Motor neuron (in vitro differentiated cells): ENCODE measurements at regions of chr4 and their contacts with region 1.

Region 1: GRCh38 chr4:158729716-158730559 is 6.7 kb upstream of the PPID start:
- ATAC-seq: peak; percentile 68 to 96 (median 86)
- H3K4me3 ChIP-seq: no peak overlapping the region
- H3K27ac ChIP-seq: no peak overlapping the region
- H3K4me1 ChIP-seq: no peaks in the 10 kb centered on the region

Region 2: GRCh38 chr4:158459085-158459820 is 270.7 kb before region 1 on chr4:
- in situ Hi-C with region 1: no loop called
- ATAC-seq: peak in 2 of 8 experiments; percentile 58 to 86
- H3K4me3 ChIP-seq: no peak overlapping the region
- H3K27ac ChIP-seq: no peak overlapping the region
- H3K4me1 ChIP-seq: no peaks in the 10 kb centered on the region

Region 3: GRCh38 chr4:158826057-158826456 is 96.1 kb after region 1 on chr4:
- in situ Hi-C with region 1: loop called in 1 of 9 experiments (anchors 25 kb)
- ATAC-seq: no peak
- H3K4me3 ChIP-seq: no peak overlapping the region
- H3K27ac ChIP-seq: no peak overlapping the region
- H3K4me1 ChIP-seq: peaks cover 0 to 9% of the 10 kb centered on the region in 2 donors

Region 4: GRCh38 chr4:159206427-159206871 is 476.5 kb after region 1 on chr4:
- in situ Hi-C with region 1: loop called in 1 of 9 experiments (anchors 25 kb)
- ATAC-seq: no peak
- H3K4me3 ChIP-seq: no peak overlapping the region
- H3K27ac ChIP-seq: no peak overlapping the region
- H3K4me1 ChIP-seq: no peaks in the 10 kb centered on the region

Region 5: DNA sequence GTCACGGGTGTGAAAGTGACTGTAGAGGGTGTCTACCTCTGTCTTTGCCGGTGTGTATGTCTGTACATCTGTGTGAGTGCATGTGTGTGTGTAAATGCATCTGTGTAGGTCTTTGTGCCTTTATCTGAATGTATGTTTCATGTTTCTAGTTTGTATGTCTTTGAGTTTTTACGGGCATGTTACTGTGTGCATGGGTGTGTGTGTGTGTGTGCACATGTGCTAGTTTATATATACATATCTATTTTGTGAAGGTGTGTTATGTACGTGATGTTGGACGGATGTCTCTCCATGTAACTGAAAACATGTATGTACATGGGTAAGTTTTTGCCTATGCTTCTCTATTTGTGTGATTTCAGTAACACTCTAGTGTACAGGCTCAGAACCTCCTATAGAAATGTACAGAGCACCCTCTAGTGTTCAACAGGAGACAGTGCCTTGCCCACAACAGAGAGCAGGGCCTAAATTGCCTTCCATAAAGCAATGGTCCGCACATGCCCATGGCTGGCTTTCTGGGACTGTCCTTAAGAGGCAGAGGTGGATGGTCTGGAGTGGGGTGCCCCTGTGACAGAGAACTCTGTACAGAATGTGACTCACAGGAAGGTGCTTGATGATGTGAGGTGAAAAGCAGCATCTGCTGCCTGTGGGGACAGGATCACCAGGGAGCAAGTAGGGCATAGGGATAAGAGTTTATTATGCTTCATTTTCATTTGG is 716.5 kb after region 1 on chr4:
- in situ Hi-C with region 1: loop called in 2 of 9 experiments (anchors 25 kb)
- ATAC-seq: peak; percentile 98 to 100 (median 100)
- H3K4me3 ChIP-seq: no peak overlapping the region
- H3K27ac ChIP-seq: no peak overlapping the region
- H3K4me1 ChIP-seq: peaks cover 0 to 8% of the 10 kb centered on the region in 2 donors